ENCODE measurements at regions of chr5 and their contacts with region 1.

Region 1: GRCh38 chr5:149834246-149834855 is 104.2 kb downstream of the PPARGC1B start:
- DNase-seq: no peak
- H3K4me3 ChIP-seq: no peak overlapping the region
- H3K27ac ChIP-seq: no peak overlapping the region
- H3K4me1 ChIP-seq: no peaks in the 10 kb centered on the region
- H3K27me3 ChIP-seq: no peaks in the 10 kb centered on the region
- CTCF ChIP-seq: peak; percentile 43 to 54 (median 53)
- POLR2A ChIP-seq: no peak

Region 2: DNA sequence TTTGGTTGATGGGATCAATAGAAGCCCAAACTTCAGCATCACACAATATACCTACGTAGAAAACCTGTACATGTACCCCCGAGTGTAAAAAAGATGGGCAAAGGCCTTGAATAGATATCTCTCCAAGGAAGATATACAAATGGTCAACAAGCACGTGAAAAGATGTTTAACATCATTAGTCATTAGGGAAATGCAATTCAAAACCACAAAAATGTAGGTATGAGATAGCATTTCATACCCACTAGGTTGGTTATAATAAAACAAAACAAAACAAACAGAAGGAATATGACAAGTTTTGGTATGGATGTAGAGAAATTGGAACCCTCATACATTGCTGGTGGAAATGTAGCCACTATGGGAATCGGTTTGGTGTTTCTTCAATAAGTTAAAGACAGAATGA is 137.3 kb before region 1 on chr5:
- intact Hi-C with region 1: no loop called
- DNase-seq: no peak
- H3K4me3 ChIP-seq: no peak overlapping the region
- H3K27ac ChIP-seq: no peak overlapping the region
- H3K4me1 ChIP-seq: no peaks in the 10 kb centered on the region
- H3K27me3 ChIP-seq: no peaks in the 10 kb centered on the region
- CTCF ChIP-seq: no peak
- POLR2A ChIP-seq: no peak

Region 3: GRCh38 chr5:149782018-149782894 is 52.1 kb before region 1 on chr5:
- intact Hi-C with region 1: no loop called
- DNase-seq: no peak
- H3K4me3 ChIP-seq: no peak overlapping the region
- H3K27ac ChIP-seq: peak overlapping the region; percentile 17
- H3K4me1 ChIP-seq: peaks cover 58% of the 10 kb centered on the region
- H3K27me3 ChIP-seq: no peaks in the 10 kb centered on the region
- CTCF ChIP-seq: no peak
- POLR2A ChIP-seq: no peak

Region 4: GRCh38 chr5:149887622-149888183 is 53.4 kb after region 1 on chr5:
- intact Hi-C with region 1: no loop called
- DNase-seq: no peak
- H3K4me3 ChIP-seq: no peak overlapping the region
- H3K27ac ChIP-seq: no peak overlapping the region
- H3K4me1 ChIP-seq: no peaks in the 10 kb centered on the region
- H3K27me3 ChIP-seq: no peaks in the 10 kb centered on the region
- CTCF ChIP-seq: no peak
- POLR2A ChIP-seq: no peak

Region 5: GRCh38 chr5:149990518-149991376 is 156.4 kb after region 1 on chr5:
- intact Hi-C with region 1: loop called (anchors 10 kb)
- DNase-seq: no peak
- H3K4me3 ChIP-seq: no peak overlapping the region
- H3K27ac ChIP-seq: no peak overlapping the region
- H3K4me1 ChIP-seq: peaks cover 6% of the 10 kb centered on the region
- H3K27me3 ChIP-seq: no peaks in the 10 kb centered on the region
- CTCF ChIP-seq: peak; percentile 78 to 94 (median 90)
- POLR2A ChIP-seq: no peak